Activated naive CD4-positive, alpha-beta T cell treated with anti-CD3 and anti-CD28 coated beads for 36 hours (primary cell): ENCODE measurements at regions of chrX and their contacts with region 1.

Region 1: GRCh38 chrX:108138814-108139702 is 47.5 kb downstream of the ATG4A start:
- DNase-seq: no peak
- H3K4me3 Mint-ChIP-seq: no peak overlapping the region
- H3K27ac Mint-ChIP-seq: no peak overlapping the region
- H3K4me1 Mint-ChIP-seq: no peaks in the 10 kb centered on the region
- H3K27me3 Mint-ChIP-seq: no peaks in the 10 kb centered on the region

Region 2: GRCh38 chrX:108091266-108091877 is 47.7 kb before region 1 on chrX and contains the starts of genes ATG4A and PSMD10:
- CTCF ChIA-PET with region 1: no interaction called
- intact Hi-C with region 1: loop called (anchors 5 kb)
- DNase-seq: peak; percentile 94
- H3K4me3 Mint-ChIP-seq: no peak within 1 kb of the TSS
- H3K27ac Mint-ChIP-seq: no peak within 1 kb of the TSS
- H3K4me1 Mint-ChIP-seq: peaks cover 19% of the 10 kb centered on the region
- H3K27me3 Mint-ChIP-seq: no peaks in the 10 kb centered on the region
- total RNA-seq, gene ATG4A: 8.2 to 8.6 TPM
- total RNA-seq, gene PSMD10: 54.6 to 58.8 TPM

Region 3: GRCh38 chrX:108573136-108573535 is 434.1 kb after region 1 on chrX:
- CTCF ChIA-PET with region 1: no interaction called
- intact Hi-C with region 1: no loop called
- DNase-seq: no peak
- H3K4me3 Mint-ChIP-seq: no peak overlapping the region
- H3K27ac Mint-ChIP-seq: no peak overlapping the region
- H3K4me1 Mint-ChIP-seq: no peaks in the 10 kb centered on the region
- H3K27me3 Mint-ChIP-seq: no peaks in the 10 kb centered on the region